ENCODE measurements at regions of chr12 and their contacts with region 1.

Region 1: GRCh38 chr12:6735448-6736191 is 11.8 kb downstream of the COPS7A start:
- DNase-seq: peak; percentile 82
- ATAC-seq: peak; percentile 80

Region 2: DNA sequence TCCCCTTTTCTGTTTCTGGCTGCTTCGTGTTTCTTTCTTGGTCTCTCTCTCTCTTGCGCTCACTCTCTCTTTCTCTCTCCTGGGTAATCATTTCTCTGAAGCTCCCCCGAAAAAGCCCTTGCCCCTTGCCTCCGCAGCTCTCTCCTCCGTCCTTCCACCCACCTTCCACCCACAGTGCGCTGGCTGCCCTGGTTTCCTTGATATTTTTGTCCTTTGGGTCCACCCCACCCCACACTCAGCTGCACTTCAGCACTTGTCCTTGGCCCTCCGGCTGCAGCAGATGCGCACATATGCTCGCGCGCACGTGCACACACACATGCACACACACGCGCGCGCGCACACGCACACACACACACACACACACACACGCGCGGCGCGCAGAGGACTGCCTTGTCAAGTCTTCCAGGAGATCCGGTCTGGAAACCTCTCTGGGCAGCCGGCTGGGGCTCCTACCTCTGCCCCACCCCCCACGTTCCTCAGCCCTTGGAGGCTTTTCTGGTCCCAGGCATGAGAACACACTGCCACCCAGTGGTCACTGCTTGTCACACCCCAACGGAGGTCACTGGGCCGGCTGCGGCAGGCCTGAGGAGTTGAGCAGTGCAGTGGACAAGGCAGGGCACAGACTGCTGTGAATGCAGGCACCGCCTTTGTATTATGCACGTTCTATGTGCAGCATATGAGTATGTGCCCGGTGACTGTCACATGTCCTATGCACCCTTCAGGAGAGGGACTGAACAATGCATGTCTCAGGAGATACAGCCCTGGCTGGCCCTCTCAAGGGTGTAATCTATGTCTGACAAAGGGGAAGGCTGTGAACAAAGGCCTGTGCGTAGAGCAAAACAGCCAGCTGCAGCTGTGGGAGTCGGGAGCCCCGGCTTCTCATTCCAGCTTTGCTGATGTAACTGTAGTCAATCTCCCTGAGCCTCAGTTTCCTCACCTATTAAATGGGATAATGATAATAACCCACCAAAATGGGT is 43.2 kb after region 1 on chr12:
- intact Hi-C with region 1: loop called (anchors 2 kb)
- DNase-seq: peak; percentile 94
- ATAC-seq: peak; percentile 97

Region 3: DNA sequence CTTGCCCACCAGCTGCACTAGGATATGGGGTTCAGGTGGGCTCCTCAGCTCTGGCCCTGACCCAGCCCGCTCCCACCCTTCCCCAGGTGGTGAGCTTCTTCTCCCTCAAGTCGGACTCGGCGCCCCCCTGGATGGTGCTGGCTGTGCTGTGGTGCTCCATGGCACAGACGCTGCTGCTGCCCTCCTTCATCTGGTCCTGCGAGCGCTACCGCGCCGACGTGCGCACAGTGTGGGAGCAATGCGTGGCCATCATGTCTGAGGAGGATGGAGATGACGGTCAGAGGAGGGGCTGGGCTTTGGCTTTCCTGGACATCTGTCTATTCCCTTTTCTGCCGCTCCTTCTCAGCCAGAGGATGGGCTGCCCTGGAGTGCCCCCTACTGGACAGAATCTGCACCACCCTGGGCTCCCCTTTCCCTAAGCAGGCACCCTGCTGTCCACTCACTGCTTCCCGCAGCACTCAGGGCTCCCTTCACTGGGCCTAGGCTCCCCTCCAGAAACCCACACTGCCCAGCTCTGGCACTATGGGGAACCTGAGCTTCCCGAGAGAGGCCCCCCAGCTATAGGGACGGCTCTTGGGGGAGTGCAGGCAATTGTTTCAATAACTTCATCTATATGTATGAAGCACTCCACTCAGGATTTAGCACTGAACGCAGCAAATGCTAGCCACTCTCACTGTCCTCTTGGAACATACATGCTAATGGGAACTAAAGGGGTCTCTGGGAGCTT is 89.9 kb after region 1 on chr12:
- intact Hi-C with region 1: loop called (anchors 2 kb)
- DNase-seq: peak; percentile 89
- ATAC-seq: peak; percentile 58